Colonic mucosa (tissue), 4 donors: ENCODE measurements at regions of chr7 and their contacts with region 1.

Region 1: DNA sequence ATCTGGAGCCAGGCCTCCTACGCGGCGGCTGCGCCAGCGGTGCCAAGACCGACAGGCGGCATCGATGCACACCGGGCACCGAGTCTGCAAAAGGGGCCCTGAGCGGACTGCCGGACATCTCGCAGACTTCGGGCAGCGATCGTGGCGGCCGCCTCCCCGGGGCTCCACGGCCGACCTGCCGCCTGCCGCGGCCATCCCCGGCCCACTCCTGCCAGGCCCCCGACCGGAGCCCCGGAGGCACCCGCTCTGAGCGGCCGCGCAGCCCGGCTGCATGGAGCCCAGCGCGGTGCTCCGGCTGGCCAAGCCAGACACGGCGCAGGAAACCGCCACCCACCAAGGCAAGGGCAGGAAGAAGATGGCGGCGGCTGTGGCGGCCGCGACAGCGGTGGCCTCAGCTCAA is 154.2 kb upstream of the KCTD7 start:
- DNase-seq: no peak
- H3K4me3 ChIP-seq: no peak overlapping the region
- H3K27ac ChIP-seq: no peak overlapping the region
- H3K4me1 ChIP-seq: no peaks in the 10 kb centered on the region
- H3K27me3 ChIP-seq: no peaks in the 10 kb centered on the region
- CTCF ChIP-seq: no peak

Region 2: GRCh38 chr7:66586181-66586580 is 111.7 kb after region 1 on chr7:
- intact Hi-C with region 1: loop called (anchors 5 kb)
- DNase-seq: no peak
- H3K4me3 ChIP-seq: no peak overlapping the region
- H3K27ac ChIP-seq: no peak overlapping the region
- H3K4me1 ChIP-seq: no peaks in the 10 kb centered on the region
- H3K27me3 ChIP-seq: no peaks in the 10 kb centered on the region
- CTCF ChIP-seq: no peak